Posterior cingulate gyrus (tissue), 11 donors: ENCODE measurements at regions of chr19 and their contacts with region 1.

Region 1: GRCh38 chr19:21482863-21483276 is 22.5 kb upstream of the ZNF429 start:
- DNase-seq: peak in 6 of 10 donors; percentile 11 to 87 (median 32)

Region 2: DNA sequence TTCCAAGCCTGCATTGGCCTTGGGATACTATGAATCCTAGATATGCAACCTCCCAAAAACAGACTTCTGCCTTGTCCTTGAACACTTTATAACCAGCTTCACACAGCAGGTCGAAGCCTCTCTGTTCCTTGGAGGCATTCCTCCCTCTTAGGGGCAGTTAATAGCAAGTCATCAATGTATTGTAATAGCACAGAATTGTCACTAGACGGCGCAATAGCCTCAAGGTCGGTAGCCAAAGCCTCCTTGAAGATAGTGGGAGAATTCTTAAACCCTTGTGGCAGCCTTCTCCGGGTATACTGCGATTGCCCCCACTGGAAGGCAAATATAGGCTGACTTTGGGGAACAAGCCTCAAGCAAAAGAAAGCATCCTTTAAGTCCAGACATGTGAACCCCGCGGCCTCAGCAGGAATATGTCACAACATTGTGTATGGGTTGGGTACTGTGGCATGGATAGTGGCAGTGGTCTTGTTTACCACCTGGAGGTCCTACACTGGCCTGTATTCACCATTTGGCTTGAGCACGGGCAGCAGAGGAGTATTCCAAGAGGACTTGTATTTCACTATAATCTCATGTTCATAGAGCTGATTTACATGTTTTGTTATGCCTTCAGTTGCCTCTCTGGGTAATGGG is 279.9 kb before region 1 on chr19:
- intact Hi-C with region 1: loop called (anchors 2 kb)
- DNase-seq: peak in 3 of 10 donors; percentile 3 to 30 (median 24)

Region 3: DNA sequence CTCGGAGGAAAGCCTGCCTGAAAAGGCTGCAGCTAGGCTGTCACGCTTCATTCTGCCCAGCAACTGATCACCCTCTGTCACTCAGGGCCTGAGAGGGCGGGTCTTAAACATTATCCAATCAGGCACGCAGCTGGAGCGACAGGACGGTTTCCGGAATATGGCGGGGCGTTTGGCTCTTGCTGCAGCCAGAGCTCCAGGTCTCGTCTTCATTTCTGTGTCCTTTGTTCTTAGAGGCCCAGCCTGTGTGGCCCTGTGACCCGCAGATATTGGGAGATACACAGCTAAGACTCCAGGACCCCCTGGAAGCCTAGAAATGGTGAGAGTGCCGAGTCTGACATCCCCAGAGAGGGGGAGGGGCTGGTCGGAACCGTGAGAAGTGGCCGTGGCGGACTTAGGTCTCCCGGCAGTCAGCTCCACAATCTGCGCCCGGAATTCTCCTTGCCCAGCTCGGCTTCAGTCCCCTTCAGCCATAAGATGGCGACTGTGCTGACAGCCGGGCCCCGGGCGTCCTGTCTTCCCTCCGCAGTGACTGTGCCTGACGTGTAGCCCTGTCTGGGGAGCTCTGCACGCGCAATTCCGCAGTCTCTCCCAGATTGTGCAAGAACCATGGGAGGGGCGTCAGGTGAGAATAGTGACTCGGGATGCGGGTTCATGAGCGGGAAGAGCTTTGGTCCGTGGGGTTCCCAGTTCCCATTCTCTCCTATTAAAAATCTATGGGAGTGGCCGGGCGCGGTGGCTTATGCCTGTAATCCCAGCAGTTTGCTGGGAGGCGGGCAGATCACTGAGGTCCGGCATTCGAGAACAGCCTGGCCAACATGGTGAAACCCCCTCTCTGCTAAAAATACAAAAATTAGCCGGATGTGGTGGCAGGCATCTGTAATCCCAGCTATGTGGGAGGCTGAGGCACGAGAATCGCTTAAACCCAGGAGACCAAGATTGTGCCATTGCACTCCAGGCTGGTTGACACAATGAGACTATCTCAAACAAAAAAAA is 22.9 kb after region 1 on chr19 and contains the start of gene ZNF429:
- intact Hi-C with region 1: no loop called
- DNase-seq: peak; percentile 86 to 99 (median 94)